SK-N-SH (cell line): ENCODE measurements at regions of chr7 and their contacts with region 1.

Region 1: DNA sequence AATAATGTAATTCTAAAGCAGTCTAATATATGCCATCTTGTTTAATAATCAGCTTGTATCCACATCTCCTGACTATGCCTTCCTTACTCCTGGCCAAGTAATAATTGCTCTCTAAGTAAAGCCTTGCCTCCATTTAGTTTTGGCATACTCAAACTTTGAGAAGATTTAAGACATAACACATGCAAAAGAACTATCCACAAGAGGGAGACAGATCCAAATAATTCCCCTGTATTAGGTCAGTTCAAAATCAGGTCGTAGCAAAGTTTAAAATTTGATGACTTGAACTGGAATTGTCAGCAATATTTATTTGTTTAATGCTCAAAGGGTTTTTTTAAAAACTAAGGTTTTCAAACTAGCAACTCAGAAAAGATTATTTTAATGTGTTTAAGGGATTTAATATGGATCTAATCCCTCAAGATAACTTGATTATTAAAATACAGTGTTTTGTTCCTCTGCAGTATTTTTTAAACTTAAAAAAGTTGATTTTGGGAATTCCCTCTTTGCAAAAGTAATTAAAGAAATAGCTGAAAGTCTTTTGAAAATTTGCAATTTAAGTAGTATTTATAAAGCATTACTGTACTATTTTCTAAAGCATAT is 95.3 kb downstream of the HDAC9 start:
- DNase-seq: peak; percentile 62
- H3K4me3 ChIP-seq: no peak overlapping the region
- H3K27ac ChIP-seq: peak overlapping the region in 1 of 2 experiments; percentile 50; a peak in 3 of 4 replicates
- H3K4me1 ChIP-seq: peaks cover 0 to 2% of the 10 kb centered on the region in 2 experiments; a peak in 1 of 4 replicates
- H3K27me3 ChIP-seq: no peaks in the 10 kb centered on the region
- CTCF ChIP-seq: peak; percentile 96
- EP300 ChIP-seq: no peak
- RAD21 ChIP-seq: peak; percentile 96

Region 2: DNA sequence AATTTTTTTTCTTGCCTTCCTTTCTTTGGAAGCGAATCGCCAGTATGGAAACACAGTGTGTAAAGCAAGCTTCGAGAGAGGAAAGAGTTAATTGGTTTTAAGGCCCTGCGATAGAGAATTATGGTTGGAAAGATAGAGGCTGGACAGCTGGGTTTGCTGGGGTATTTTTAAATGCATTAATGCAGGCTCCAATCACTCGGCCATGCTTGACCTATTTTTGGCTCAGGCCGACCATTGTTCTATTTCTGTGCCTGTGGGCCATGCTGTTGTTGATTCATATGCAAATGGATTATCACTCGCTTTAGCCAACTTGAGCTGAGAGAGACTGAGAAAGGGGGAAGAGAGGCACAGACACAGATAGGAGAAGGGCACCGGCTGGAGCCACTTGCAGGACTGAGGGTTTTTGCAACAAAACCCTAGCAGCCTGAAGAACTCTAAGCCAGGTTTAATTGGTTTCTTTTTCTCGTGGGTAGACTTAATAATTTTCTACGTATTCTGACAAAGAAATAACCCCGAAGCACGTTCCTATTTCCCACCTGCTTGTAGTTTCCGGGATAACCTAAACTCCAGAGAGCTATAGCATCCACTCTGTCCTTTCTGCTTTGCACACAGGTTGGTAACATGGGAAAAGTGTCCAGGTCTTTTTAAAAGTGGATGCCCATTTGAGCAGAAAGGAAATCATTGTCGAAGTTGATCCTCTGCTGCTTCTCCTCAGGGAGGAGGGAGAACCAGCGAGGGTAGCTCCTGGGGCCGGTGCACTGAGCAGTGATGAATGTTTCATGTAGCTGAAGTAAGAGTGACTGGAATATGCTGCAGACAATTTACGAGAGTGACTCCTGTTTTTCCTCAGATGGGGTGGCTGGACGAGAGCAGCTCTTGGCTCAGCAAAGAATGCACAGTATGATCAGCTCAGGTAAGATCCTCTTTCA is 95.2 kb before region 1 on chr7 and contains the start of gene HDAC9:
- CTCF ChIA-PET with region 1: interaction called, 12 read pairs
- POLR2A ChIA-PET with region 1: no interaction called
- DNase-seq: peak; percentile 49
- H3K4me3 ChIP-seq: peak within 1 kb of the TSS; percentile 63 to 67
- H3K27ac ChIP-seq: peak within 1 kb of the TSS; percentile 80 to 100
- H3K4me1 ChIP-seq: peaks cover 8 to 53% of the 10 kb centered on the region in 2 experiments; a peak in 3 of 4 replicates
- H3K27me3 ChIP-seq: no peaks in the 10 kb centered on the region
- CTCF ChIP-seq: no peak
- EP300 ChIP-seq: peak; percentile 62 to 93; a peak in 2 of 4 replicates
- RAD21 ChIP-seq: peak; percentile 43
- polyA plus RNA-seq, gene HDAC9: 11.6 and 19.8 TPM in 2 replicates

Region 3: DNA sequence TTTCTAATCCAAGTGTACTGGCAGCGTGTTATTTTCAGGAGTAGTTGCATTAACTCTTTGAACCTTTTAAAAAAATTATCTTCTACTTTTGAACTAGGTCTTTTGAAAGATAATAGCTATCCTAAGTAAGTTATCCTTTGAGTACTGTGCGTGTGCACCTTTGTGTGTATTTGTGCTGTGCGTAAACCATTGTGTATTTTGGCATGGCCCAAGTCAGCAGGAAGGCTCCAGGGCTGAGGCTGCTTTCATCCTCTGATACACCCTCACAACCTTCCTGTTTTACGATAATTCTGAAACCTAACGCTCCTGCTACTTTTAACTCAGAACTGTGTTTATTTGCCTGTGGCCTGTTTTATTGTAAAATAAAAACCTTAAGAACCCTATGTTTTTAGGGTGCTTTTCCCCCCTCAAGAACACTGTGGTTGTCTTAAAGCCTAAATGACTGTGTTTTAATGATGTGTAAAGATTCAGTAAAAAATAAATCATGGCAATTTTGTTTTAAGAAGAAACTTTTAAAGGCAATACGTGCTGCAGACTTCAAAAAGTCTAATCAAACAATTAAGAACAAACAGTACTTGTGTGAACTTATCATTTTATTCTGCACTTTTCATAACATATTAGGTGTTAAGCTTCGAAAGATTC is 37.8 kb before region 1 on chr7:
- CTCF ChIA-PET with region 1: no interaction called
- POLR2A ChIA-PET with region 1: no interaction called
- DNase-seq: peak; percentile 41
- H3K4me3 ChIP-seq: no peak overlapping the region
- H3K27ac ChIP-seq: peak overlapping the region; percentile 38 to 69
- H3K4me1 ChIP-seq: peaks cover 36 to 61% of the 10 kb centered on the region in 2 experiments
- H3K27me3 ChIP-seq: no peaks in the 10 kb centered on the region
- CTCF ChIP-seq: no peak
- EP300 ChIP-seq: no peak
- RAD21 ChIP-seq: no peak

Region 4: DNA sequence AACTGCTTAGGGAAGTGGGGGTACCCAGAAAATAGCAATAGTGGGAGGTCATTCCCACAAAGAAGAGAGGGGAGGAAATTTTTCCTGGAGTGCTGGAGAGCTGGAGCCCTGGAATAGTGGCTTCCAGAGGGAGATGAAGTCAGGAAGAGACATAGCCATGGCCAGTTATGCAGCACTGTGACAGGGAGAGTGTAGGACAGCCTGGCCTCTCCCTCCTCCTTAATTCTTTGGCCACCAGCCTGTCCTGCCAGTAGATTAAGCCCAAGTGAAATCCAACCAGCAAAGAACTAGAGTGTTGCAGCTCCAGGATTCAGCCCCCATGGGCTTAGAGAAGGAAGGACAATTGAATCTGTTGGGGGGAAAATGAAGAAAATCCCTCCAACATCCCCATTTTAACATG is 35.2 kb after region 1 on chr7:
- CTCF ChIA-PET with region 1: interaction called, 10 read pairs
- POLR2A ChIA-PET with region 1: no interaction called
- DNase-seq: no peak
- H3K4me3 ChIP-seq: no peak overlapping the region
- H3K27ac ChIP-seq: no peak overlapping the region
- H3K4me1 ChIP-seq: peaks cover 0 to 10% of the 10 kb centered on the region in 2 experiments; a peak in 2 of 4 replicates
- H3K27me3 ChIP-seq: no peaks in the 10 kb centered on the region
- CTCF ChIP-seq: no peak
- EP300 ChIP-seq: no peak
- RAD21 ChIP-seq: no peak

Region 5: GRCh38 chr7:18655912-18656311 is 65.1 kb after region 1 on chr7:
- CTCF ChIA-PET with region 1: interaction called, 10 read pairs
- POLR2A ChIA-PET with region 1: no interaction called
- DNase-seq: no peak
- H3K4me3 ChIP-seq: no peak overlapping the region
- H3K27ac ChIP-seq: no peak overlapping the region; a peak in 1 of 4 replicates
- H3K4me1 ChIP-seq: peaks cover 0 to 5% of the 10 kb centered on the region in 2 experiments
- H3K27me3 ChIP-seq: no peaks in the 10 kb centered on the region
- CTCF ChIP-seq: no peak
- EP300 ChIP-seq: no peak
- RAD21 ChIP-seq: no peak

Region 6: GRCh38 chr7:19665399-19666008 is 1074.7 kb after region 1 on chr7:
- CTCF ChIA-PET with region 1: interaction called, 16 read pairs
- POLR2A ChIA-PET with region 1: no interaction called
- DNase-seq: peak; percentile 39
- H3K4me3 ChIP-seq: no peak overlapping the region
- H3K27ac ChIP-seq: no peak overlapping the region
- H3K4me1 ChIP-seq: peaks cover 0 to 3% of the 10 kb centered on the region in 2 experiments; a peak in 2 of 4 replicates
- H3K27me3 ChIP-seq: no peaks in the 10 kb centered on the region; the same call in 1 of the 2 replicates
- CTCF ChIP-seq: peak; percentile 93
- EP300 ChIP-seq: no peak
- RAD21 ChIP-seq: peak; percentile 82